CD4-positive, alpha-beta T cell (primary cell): ENCODE measurements at regions of chr12 and their contacts with region 1.

Region 1: GRCh38 chr12:1594261-1595025 is at the start of gene FBXL14:
- DNase-seq: peak; percentile 84 to 96 (median 90)
- ATAC-seq: peak; percentile 56
- H3K4me3 ChIP-seq: peak within 1 kb of the TSS; percentile 79
- H3K4me3 Mint-ChIP-seq: peak within 1 kb of the TSS; percentile 95
- H3K27ac ChIP-seq: peak within 1 kb of the TSS; percentile 73 to 88
- H3K27ac Mint-ChIP-seq: peak within 1 kb of the TSS; percentile 91
- H3K4me1 ChIP-seq: peaks cover 37% of the 10 kb centered on the region
- H3K4me1 Mint-ChIP-seq: peaks cover 55% of the 10 kb centered on the region
- H3K27me3 ChIP-seq: no peaks in the 10 kb centered on the region
- H3K27me3 Mint-ChIP-seq: no peaks in the 10 kb centered on the region
- CTCF ChIP-seq: no peak
- total RNA-seq, gene FBXL14: 32.3 to 33.6 TPM

Region 2: GRCh38 chr12:389139-390096 is 1205.0 kb before region 1 on chr12 and contains the start of gene KDM5A:
- CTCF ChIA-PET with region 1: no interaction called
- POLR2A ChIA-PET with region 1: no interaction called
- intact Hi-C with region 1: loop called in 1 of 2 experiments (anchors 5 kb)
- DNase-seq: peak; percentile 81 to 96 (median 88)
- ATAC-seq: peak; percentile 90
- H3K4me3 ChIP-seq: peak within 1 kb of the TSS; percentile 91
- H3K4me3 Mint-ChIP-seq: peak within 1 kb of the TSS; percentile 99
- H3K27ac ChIP-seq: peak within 1 kb of the TSS; percentile 90 to 93
- H3K27ac Mint-ChIP-seq: peak within 1 kb of the TSS; percentile 93
- H3K4me1 ChIP-seq: peaks cover 10% of the 10 kb centered on the region
- H3K4me1 Mint-ChIP-seq: peaks cover 48% of the 10 kb centered on the region
- H3K27me3 ChIP-seq: no peaks in the 10 kb centered on the region
- H3K27me3 Mint-ChIP-seq: no peaks in the 10 kb centered on the region
- CTCF ChIP-seq: no peak
- total RNA-seq, gene KDM5A: 149 to 151 TPM

Region 3: DNA sequence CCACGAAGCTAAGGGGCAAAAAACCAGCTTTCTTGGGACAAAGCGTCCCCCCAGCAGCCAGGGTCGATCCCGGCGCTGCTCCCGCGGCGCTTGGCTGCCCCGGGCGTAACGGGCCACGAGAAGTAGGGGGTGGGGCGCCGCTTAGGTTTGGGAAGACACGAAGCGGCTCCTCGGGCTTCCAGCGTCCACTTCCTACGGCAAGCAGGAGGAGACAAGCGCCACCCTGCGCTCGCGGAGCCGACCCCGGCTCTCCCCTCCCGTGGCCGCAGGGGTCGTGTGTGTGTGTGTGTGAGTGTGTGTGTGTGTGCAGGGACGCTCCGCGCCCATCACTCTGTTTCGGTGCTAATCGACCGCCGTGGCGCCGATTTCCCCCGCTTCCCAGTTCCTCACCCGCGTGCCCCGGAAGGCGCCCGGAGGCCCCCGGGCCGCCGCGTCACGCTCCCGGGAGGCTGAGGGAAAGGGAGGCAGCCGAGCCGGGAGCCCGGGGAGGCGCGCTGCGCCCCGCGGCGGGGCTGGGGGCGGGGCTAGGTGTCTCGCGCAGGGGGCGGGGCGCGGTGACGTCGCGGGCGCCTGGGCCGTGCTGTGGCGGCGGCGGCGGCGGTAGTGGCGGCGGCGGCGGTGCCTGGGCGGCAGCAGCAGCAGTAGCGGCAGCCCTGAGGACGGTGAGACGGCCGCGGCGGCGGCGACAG is 603.6 kb before region 1 on chr12 and contains the start of gene ERC1:
- CTCF ChIA-PET with region 1: no interaction called
- POLR2A ChIA-PET with region 1: interaction called, 3 read pairs
- intact Hi-C with region 1: loop called (anchors 5 kb)
- DNase-seq: peak; percentile 68 to 94 (median 84)
- ATAC-seq: peak; percentile 81
- H3K4me3 ChIP-seq: peak within 1 kb of the TSS; percentile 89
- H3K4me3 Mint-ChIP-seq: peak within 1 kb of the TSS; percentile 99
- H3K27ac ChIP-seq: peak within 1 kb of the TSS; percentile 69 to 74
- H3K27ac Mint-ChIP-seq: peak within 1 kb of the TSS; percentile 96
- H3K4me1 ChIP-seq: peaks cover 23% of the 10 kb centered on the region
- H3K4me1 Mint-ChIP-seq: peaks cover 47% of the 10 kb centered on the region
- H3K27me3 ChIP-seq: no peaks in the 10 kb centered on the region
- H3K27me3 Mint-ChIP-seq: no peaks in the 10 kb centered on the region
- CTCF ChIP-seq: no peak
- total RNA-seq, gene ERC1: 40.1 to 49.6 TPM

Region 4: GRCh38 chr12:1117970-1118563 is 476.4 kb before region 1 on chr12:
- CTCF ChIA-PET with region 1: interaction called, 14 read pairs
- POLR2A ChIA-PET with region 1: interaction called, 16 read pairs
- intact Hi-C with region 1: no loop called
- DNase-seq: peak; percentile 53 to 89 (median 64)
- ATAC-seq: peak; percentile 57
- H3K4me3 ChIP-seq: no peak overlapping the region
- H3K4me3 Mint-ChIP-seq: no peak overlapping the region
- H3K27ac ChIP-seq: no peak overlapping the region
- H3K27ac Mint-ChIP-seq: no peak overlapping the region
- H3K4me1 ChIP-seq: peaks cover 4% of the 10 kb centered on the region
- H3K4me1 Mint-ChIP-seq: peaks cover 20% of the 10 kb centered on the region
- H3K27me3 ChIP-seq: no peaks in the 10 kb centered on the region
- H3K27me3 Mint-ChIP-seq: no peaks in the 10 kb centered on the region
- CTCF ChIP-seq: peak; percentile 95

Region 5: GRCh38 chr12:1332327-1332726 is 262.1 kb before region 1 on chr12:
- CTCF ChIA-PET with region 1: no interaction called
- POLR2A ChIA-PET with region 1: no interaction called
- intact Hi-C with region 1: no loop called
- DNase-seq: no peak
- ATAC-seq: no peak
- H3K4me3 ChIP-seq: no peak overlapping the region
- H3K4me3 Mint-ChIP-seq: no peak overlapping the region
- H3K27ac ChIP-seq: no peak overlapping the region
- H3K27ac Mint-ChIP-seq: no peak overlapping the region
- H3K4me1 ChIP-seq: no peaks in the 10 kb centered on the region
- H3K4me1 Mint-ChIP-seq: peaks cover 13% of the 10 kb centered on the region
- H3K27me3 ChIP-seq: no peaks in the 10 kb centered on the region
- H3K27me3 Mint-ChIP-seq: no peaks in the 10 kb centered on the region
- CTCF ChIP-seq: no peak

Region 6: GRCh38 chr12:1583421-1584078 is 10.9 kb before region 1 on chr12:
- CTCF ChIA-PET with region 1: interaction called, 7 read pairs
- POLR2A ChIA-PET with region 1: interaction called, 34 read pairs
- intact Hi-C with region 1: no loop called
- DNase-seq: peak in 13 of 14 experiments; percentile 37 to 88 (median 53)
- ATAC-seq: peak; percentile 74
- H3K4me3 ChIP-seq: no peak overlapping the region
- H3K4me3 Mint-ChIP-seq: peak overlapping the region; percentile 2
- H3K27ac ChIP-seq: no peak overlapping the region
- H3K27ac Mint-ChIP-seq: peak overlapping the region; percentile 16
- H3K4me1 ChIP-seq: peaks cover 5% of the 10 kb centered on the region
- H3K4me1 Mint-ChIP-seq: peaks cover 26% of the 10 kb centered on the region
- H3K27me3 ChIP-seq: no peaks in the 10 kb centered on the region
- H3K27me3 Mint-ChIP-seq: no peaks in the 10 kb centered on the region
- CTCF ChIP-seq: peak; percentile 96

Region 7: GRCh38 chr12:1605129-1606020 is 10.9 kb after region 1 on chr12:
- CTCF ChIA-PET with region 1: interaction called, 17 read pairs
- POLR2A ChIA-PET with region 1: interaction called, 65 read pairs
- intact Hi-C with region 1: no loop called
- DNase-seq: peak; percentile 37 to 87 (median 50)
- ATAC-seq: peak; percentile 69
- H3K4me3 ChIP-seq: peak overlapping the region; percentile 51
- H3K4me3 Mint-ChIP-seq: peak overlapping the region; percentile 79
- H3K27ac ChIP-seq: no peak overlapping the region
- H3K27ac Mint-ChIP-seq: peak overlapping the region; percentile 10
- H3K4me1 ChIP-seq: peaks cover 26% of the 10 kb centered on the region
- H3K4me1 Mint-ChIP-seq: peaks cover 39% of the 10 kb centered on the region
- H3K27me3 ChIP-seq: no peaks in the 10 kb centered on the region
- H3K27me3 Mint-ChIP-seq: no peaks in the 10 kb centered on the region
- CTCF ChIP-seq: peak; percentile 77